Head of caudate nucleus (tissue), 42 donors: ENCODE measurements at regions of chr2 and their contacts with region 1.

Region 1: DNA sequence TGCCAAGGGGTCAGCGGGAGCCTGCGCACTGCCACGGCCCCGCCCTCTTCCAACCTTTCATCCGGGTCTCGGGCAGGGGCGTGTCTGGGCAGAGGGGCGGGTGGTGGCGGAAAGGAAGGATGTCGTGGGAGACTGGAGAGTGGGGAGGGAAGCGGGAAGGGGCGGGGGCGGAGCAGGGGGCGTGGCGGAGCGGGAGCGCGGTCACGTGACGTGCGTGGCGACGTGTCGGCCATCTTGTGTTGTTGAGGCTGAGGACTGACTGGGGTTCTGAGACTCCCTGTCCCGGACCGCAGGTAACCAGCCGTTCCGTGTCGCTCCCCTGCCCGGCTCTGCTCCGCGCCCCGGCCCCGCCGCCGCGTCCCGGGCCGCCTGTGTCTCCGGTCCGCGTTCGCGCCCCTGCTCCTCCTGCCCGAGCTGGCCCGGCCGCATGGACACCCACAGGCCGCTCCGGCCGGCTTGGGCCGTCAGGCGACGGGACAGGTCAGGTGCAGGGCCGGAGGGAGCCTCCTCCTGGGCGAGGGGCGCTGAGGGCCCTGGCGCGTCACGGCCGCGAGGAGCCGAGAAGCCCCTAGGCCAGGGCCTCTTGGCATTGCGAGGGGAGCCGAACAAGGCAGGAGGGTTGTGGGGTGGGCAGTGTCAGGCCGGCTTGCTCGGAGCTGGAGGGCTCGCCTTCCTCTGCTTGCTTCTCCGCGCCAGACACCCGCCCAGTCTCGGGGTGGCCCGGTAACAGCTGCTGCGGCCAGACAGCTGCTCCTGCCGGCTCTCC is at the start of gene GIGYF2:
- DNase-seq: peak; percentile 89 to 99 (median 97)

Region 2: DNA sequence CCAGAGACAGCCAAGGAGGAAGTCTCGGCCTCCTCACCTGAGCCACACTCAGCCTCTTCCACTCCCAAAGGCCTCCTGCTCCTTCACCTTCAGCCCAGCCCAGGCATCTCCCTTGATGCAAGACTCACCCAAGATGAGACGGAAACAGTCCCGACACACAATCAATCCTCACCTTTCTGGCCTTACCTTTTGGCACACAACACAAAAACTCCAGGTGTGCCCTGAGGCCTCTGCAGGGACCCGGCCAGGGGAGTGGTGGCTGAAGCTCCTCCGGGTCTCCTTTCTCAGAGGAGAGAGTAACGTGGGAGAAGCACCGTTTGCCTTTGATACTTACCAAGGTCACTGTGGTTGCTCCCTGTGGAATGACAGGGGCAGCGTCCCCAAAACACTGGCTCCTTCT is 87.7 kb before region 1 on chr2:
- intact Hi-C with region 1: loop called (anchors 2 kb)
- DNase-seq: no peak

Region 3: DNA sequence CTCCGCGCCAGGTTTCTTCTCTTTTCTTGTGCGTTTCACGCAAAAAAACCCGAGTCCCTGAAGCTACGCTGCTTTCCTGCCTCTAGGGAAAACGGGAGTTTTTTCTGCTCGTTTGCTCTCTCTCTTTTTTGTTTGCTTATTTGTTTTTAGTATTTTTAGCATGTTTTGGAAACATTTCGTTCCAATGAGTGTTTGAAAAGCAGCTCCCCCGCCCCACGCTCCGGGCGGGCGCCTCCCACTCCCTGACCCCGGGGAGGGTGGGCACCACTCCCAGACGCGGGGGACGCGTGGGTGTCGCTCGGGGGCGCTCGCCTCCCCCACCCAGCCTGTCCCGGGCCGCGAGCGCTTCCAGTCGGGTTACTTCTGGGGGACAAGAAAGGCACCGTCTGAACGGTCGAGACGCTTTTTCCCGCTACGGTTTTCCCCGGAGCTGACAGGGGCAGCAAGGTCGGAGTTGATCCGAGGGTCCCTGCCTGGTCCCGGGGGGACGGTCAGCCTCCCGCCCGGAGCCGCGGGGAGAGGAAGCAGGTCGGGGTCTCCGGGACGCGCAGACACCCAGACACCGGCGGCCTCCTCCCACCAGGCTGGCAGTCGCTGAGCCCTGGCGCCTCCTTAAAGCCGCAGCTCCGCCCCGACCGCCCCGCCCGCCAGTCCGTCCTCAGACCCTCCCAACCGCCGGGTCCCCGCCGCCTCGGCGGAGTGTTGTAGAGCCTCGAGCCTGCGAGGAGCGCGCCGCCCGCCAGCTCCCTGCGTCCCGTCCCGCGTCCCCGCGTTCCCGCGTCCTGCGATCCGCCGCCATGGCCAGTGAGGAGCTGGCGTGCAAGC is 64.2 kb before region 1 on chr2 and contains the start of gene EFHD1:
- intact Hi-C with region 1: loop called (anchors 10 kb)
- DNase-seq: peak; percentile 64 to 95 (median 87)

Region 4: GRCh38 chr2:232658196-232658785 is 39.0 kb before region 1 on chr2:
- intact Hi-C with region 1: no loop called
- DNase-seq: no peak